Heart right ventricle (tissue), 16 donors: ENCODE measurements at regions of chr15 and their contacts with region 1.

Region 1: GRCh38 chr15:72312605-72313447 is 7.1 kb downstream of the CELF6 start:
- DNase-seq: peak; percentile 54 to 56
- ATAC-seq: peak; percentile 75 to 92 (median 86)
- H3K4me3 ChIP-seq: no peak overlapping the region
- H3K27ac ChIP-seq: no peak overlapping the region
- H3K4me1 ChIP-seq: no peaks in the 10 kb centered on the region
- H3K27me3 ChIP-seq: no peaks in the 10 kb centered on the region
- CTCF ChIP-seq: peak; percentile 44 to 80 (median 67)

Region 2: GRCh38 chr15:72585476-72586082 is 272.8 kb after region 1 on chr15:
- intact Hi-C with region 1: loop called in 1 of 10 experiments (anchors 10 kb)
- DNase-seq: no peak
- ATAC-seq: no peak
- H3K4me3 ChIP-seq: no peak overlapping the region
- H3K27ac ChIP-seq: no peak overlapping the region
- H3K4me1 ChIP-seq: peaks cover 0 to 13% (median 0%) of the 10 kb centered on the region in 9 donors
- H3K27me3 ChIP-seq: no peaks in the 10 kb centered on the region
- CTCF ChIP-seq: peak in 2 of 9 donors; percentile 17 to 27